T-cell (primary cell): ENCODE measurements at regions of chr9 and their contacts with region 1.

Region 1: DNA sequence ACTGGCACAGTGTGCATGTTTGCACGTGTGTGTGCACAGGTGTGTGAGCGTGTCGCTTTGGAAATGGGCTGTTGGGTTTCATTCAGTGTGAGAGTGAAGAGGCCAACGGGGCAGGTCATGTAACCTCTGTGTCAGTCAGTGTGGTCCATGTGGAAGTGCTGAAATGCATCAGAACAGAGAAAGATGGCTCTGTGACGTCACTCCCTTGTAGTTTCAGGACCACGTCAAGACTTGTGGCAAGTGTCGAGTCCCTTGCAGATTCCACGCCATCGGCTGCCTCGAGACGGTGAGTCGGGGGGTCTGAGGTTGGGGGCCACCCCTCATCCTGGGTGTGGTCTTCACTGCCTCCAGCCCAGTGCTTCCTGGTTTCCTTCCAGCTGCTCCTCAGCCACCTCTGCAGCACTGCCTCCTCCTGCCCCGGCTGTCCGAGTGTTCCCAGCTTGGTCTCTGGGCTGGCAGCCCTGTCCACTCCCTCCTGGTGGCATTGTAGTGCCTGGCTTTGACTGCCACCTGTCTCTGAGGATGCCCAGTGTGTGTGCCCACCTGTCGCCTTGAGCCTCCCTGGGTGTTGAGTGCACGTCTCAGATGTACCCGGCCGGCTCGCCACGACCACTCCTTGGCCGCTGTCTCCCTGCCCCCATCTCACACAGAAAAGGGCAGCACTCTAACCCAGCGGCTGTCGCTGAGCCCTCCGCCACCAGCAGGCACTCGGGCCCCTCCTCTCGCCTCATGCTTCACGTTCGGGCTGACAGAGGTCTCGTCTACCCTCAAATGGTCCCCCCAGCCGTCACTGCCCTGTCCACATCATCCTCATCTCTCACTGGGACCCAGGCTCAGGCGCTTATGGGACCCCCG is 28.0 kb downstream of the FBXW5 start:
- DNase-seq: no peak
- ATAC-seq: no peak
- H3K4me3 ChIP-seq: no peak overlapping the region
- H3K4me3 Mint-ChIP-seq: no peak overlapping the region
- H3K27ac ChIP-seq: no peak overlapping the region
- H3K27ac Mint-ChIP-seq: no peak overlapping the region
- H3K4me1 ChIP-seq: peaks cover 0 to 2% of the 10 kb centered on the region in 2 experiments
- H3K4me1 Mint-ChIP-seq: peaks cover 0 to 4% (median 0%) of the 10 kb centered on the region in 3 donors
- H3K27me3 ChIP-seq: no peaks in the 10 kb centered on the region
- H3K27me3 Mint-ChIP-seq: no peaks in the 10 kb centered on the region

Region 2: DNA sequence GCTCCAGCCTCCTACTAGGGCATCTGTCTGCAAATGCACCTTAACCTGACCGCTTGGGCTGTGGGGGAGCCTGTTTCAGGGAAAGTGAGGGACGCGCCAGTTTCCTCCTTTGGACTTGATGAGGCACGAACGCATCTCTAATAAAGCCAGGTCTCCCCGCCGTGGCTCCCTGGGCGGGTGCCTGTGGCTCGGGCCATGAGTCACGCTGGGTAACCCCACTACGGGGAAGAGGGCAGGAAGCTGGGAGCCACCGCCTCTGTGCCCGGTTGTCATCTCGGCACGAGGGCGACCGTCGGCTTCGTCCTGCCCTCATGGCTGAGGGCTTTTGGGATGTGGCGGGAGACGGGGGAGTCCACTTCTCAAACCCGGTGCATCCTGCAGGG is 382.8 kb before region 1 on chr9:
- CTCF ChIA-PET with region 1: interaction called in 1 of 2 experiments, 14 read pairs
- POLR2A ChIA-PET with region 1: no interaction called
- DNase-seq: peak in 33 of 35 experiments; percentile 19 to 78 (median 48)
- ATAC-seq: peak; percentile 51 to 77 (median 76)
- H3K4me3 ChIP-seq: peak overlapping the region; percentile 47 to 50
- H3K4me3 Mint-ChIP-seq: peak overlapping the region; percentile 61 to 81 (median 73)
- H3K27ac ChIP-seq: peak overlapping the region; percentile 78
- H3K27ac Mint-ChIP-seq: peak overlapping the region; percentile 85 to 90
- H3K4me1 ChIP-seq: peaks cover 59 to 96% of the 10 kb centered on the region in 2 experiments
- H3K4me1 Mint-ChIP-seq: peaks cover 55 to 75% (median 57%) of the 10 kb centered on the region in 3 donors
- H3K27me3 ChIP-seq: no peaks in the 10 kb centered on the region
- H3K27me3 Mint-ChIP-seq: no peaks in the 10 kb centered on the region

Region 3: DNA sequence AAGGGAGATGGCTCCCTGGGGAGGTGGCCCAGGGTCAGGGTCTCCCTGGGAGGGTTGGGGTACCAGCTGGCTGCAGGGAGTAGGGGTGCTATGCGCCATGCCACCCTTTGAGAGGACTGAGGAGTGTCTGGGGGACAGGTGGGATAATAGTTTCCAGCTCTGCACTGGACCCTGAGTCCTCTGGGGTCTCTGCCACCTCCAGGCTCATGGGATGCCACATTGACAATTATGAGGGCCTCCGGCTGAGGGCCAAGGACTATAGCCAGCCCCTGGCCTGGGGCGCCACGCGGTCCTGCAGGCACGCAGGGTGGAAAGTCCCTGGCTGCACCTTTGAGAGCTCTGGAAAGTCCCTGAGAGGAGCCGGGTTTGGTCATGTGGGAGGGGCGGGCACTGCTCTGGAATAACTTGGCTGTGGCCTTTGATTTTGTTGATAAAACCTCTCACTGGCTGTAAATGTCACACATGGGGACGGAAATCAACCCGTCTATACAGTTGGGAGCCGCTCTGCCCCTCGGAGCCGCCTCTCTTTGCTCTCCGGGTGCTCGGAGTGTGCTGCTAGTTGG is 14.2 kb before region 1 on chr9:
- CTCF ChIA-PET with region 1: no interaction called
- POLR2A ChIA-PET with region 1: no interaction called
- DNase-seq: peak in 34 of 35 experiments; percentile 42 to 93 (median 80)
- ATAC-seq: peak; percentile 66 to 91 (median 77)
- H3K4me3 ChIP-seq: peak overlapping the region in 1 of 2 donors; percentile 6
- H3K4me3 Mint-ChIP-seq: peak overlapping the region; percentile 61 to 75 (median 68)
- H3K27ac ChIP-seq: peak overlapping the region; percentile 95
- H3K27ac Mint-ChIP-seq: peak overlapping the region; percentile 97 to 98
- H3K4me1 ChIP-seq: peaks cover 18 to 50% of the 10 kb centered on the region in 2 experiments
- H3K4me1 Mint-ChIP-seq: peaks cover 36 to 45% (median 36%) of the 10 kb centered on the region in 3 donors
- H3K27me3 ChIP-seq: no peaks in the 10 kb centered on the region
- H3K27me3 Mint-ChIP-seq: no peaks in the 10 kb centered on the region

Region 4: GRCh38 chr9:136928591-136928990 is 12.0 kb after region 1 on chr9:
- CTCF ChIA-PET with region 1: no interaction called
- POLR2A ChIA-PET with region 1: interaction called in 1 of 2 experiments, 12 read pairs
- DNase-seq: no peak
- ATAC-seq: peak in 1 of 4 experiments; percentile 19
- H3K4me3 ChIP-seq: no peak overlapping the region
- H3K4me3 Mint-ChIP-seq: no peak overlapping the region
- H3K27ac ChIP-seq: no peak overlapping the region
- H3K27ac Mint-ChIP-seq: peak overlapping the region in 1 of 2 donors; percentile 29
- H3K4me1 ChIP-seq: no peaks in the 10 kb centered on the region
- H3K4me1 Mint-ChIP-seq: peaks cover 2 to 7% (median 6%) of the 10 kb centered on the region in 3 donors
- H3K27me3 ChIP-seq: no peaks in the 10 kb centered on the region
- H3K27me3 Mint-ChIP-seq: no peaks in the 10 kb centered on the region